H1 (cell line): ENCODE measurements at regions of chr10 and their contacts with region 1.

Region 1: DNA sequence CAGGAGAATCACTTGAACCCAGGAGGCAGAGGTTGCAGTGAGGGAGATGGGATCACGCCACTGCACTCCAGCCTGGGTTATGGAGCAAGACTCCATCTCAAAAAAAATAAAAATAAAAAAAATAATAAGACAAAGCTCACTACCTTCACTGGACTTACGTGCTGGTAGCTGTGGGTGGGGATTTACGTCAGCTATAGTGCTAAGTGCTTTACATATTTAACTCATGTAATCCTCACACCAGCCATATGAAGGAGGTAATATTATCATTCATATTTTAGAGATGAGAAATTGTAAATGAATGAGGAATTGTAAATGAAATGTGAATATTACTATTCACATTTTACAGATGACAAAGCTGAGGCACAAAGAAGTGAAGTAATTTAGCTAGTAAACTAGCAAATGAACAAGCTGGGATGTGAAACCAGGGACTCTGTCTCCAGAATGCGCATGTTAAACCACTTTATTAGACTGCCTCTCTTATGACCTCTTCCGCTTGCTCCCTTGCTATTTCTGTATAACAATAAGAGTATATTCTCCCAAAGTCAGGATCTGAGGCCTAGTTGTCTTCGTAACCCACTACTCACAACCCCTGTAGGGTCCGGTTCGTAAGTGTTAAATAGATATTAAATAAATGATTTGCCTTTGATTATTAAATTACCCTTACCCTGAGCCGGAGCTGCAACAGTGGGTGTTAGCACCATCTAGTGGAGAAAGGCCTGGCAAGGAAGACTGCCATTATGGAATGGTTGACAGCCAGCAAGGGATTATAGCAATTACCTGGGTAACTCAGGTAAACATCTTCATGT is 70.2 kb downstream of the HTR7 start:
- DNase-seq: no peak
- H3K4me3 ChIP-seq: no peak overlapping the region
- H3K27ac ChIP-seq: no peak overlapping the region
- H3K4me1 ChIP-seq: peaks cover 0 to 11% (median 4%) of the 10 kb centered on the region in 4 experiments; a peak in 4 of 7 replicates
- H3K27me3 ChIP-seq: no peaks in the 10 kb centered on the region
- CTCF ChIP-seq: peak; percentile 57 to 86 (median 76)
- EP300 ChIP-seq: no peak
- POLR2A ChIP-seq: no peak
- RAD21 ChIP-seq: peak; percentile 65 to 77

Region 2: GRCh38 chr10:90579602-90580242 is 207.9 kb before region 1 on chr10:
- CTCF ChIA-PET with region 1: no interaction called
- POLR2A ChIA-PET with region 1: no interaction called
- DNase-seq: peak in 1 of 2 experiments; percentile 15
- H3K4me3 ChIP-seq: no peak overlapping the region
- H3K27ac ChIP-seq: no peak overlapping the region
- H3K4me1 ChIP-seq: no peaks in the 10 kb centered on the region
- H3K27me3 ChIP-seq: no peaks in the 10 kb centered on the region
- CTCF ChIP-seq: peak; percentile 44 to 61 (median 56)
- EP300 ChIP-seq: no peak
- POLR2A ChIP-seq: no peak
- RAD21 ChIP-seq: peak; percentile 58 to 69

Region 3: DNA sequence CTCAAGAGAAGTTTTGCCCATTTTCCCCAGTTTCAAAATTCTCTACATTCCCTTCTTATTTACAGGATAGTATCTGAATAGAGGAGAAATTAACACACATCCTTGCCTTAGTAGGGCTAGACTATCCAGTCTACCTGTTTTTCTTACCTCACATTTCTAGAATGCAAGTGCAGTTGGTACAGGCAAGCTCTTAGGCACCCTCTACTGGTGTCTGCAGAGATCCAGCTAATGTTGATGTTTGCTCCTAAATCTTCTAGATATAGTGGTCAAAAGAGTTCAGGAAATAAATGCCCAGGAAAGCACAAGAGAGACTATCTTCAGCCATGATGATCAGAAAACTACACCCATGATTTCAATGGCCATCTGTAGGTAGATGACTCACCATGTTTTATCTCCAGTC is 135.1 kb before region 1 on chr10:
- CTCF ChIA-PET with region 1: no interaction called
- POLR2A ChIA-PET with region 1: no interaction called
- DNase-seq: no peak
- H3K4me3 ChIP-seq: no peak overlapping the region
- H3K27ac ChIP-seq: no peak overlapping the region
- H3K4me1 ChIP-seq: no peaks in the 10 kb centered on the region
- H3K27me3 ChIP-seq: no peaks in the 10 kb centered on the region
- CTCF ChIP-seq: peak in 2 of 3 experiments; percentile 56 to 62; a peak in 3 of 4 replicates
- EP300 ChIP-seq: no peak
- POLR2A ChIP-seq: no peak
- RAD21 ChIP-seq: peak; percentile 73 to 79

Region 4: GRCh38 chr10:90751107-90751997 is 36.2 kb before region 1 on chr10:
- CTCF ChIA-PET with region 1: interaction called, 29 read pairs
- POLR2A ChIA-PET with region 1: no interaction called
- DNase-seq: peak in 1 of 2 experiments; percentile 79
- H3K4me3 ChIP-seq: no peak overlapping the region
- H3K27ac ChIP-seq: no peak overlapping the region
- H3K4me1 ChIP-seq: peaks cover 0 to 2% (median 0%) of the 10 kb centered on the region in 4 experiments; a peak in 2 of 7 replicates
- H3K27me3 ChIP-seq: no peaks in the 10 kb centered on the region
- CTCF ChIP-seq: peak; percentile 35 to 87 (median 73)
- EP300 ChIP-seq: no peak
- POLR2A ChIP-seq: no peak
- RAD21 ChIP-seq: peak; percentile 93 to 96

Region 5: GRCh38 chr10:90798482-90798881 is 10.9 kb after region 1 on chr10:
- CTCF ChIA-PET with region 1: interaction called, 37 read pairs
- POLR2A ChIA-PET with region 1: interaction called, 7 read pairs
- DNase-seq: no peak
- H3K4me3 ChIP-seq: no peak overlapping the region
- H3K27ac ChIP-seq: no peak overlapping the region
- H3K4me1 ChIP-seq: peaks cover 0 to 2% (median 0%) of the 10 kb centered on the region in 4 experiments; a peak in 1 of 7 replicates
- H3K27me3 ChIP-seq: 0 out of 7 replicates have a peak, but pooled peaks cover 0 to under 1% (median 0%) of the 10 kb centered on the region in 4 experiments
- CTCF ChIP-seq: no peak
- EP300 ChIP-seq: no peak
- POLR2A ChIP-seq: no peak
- RAD21 ChIP-seq: no peak

Region 6: DNA sequence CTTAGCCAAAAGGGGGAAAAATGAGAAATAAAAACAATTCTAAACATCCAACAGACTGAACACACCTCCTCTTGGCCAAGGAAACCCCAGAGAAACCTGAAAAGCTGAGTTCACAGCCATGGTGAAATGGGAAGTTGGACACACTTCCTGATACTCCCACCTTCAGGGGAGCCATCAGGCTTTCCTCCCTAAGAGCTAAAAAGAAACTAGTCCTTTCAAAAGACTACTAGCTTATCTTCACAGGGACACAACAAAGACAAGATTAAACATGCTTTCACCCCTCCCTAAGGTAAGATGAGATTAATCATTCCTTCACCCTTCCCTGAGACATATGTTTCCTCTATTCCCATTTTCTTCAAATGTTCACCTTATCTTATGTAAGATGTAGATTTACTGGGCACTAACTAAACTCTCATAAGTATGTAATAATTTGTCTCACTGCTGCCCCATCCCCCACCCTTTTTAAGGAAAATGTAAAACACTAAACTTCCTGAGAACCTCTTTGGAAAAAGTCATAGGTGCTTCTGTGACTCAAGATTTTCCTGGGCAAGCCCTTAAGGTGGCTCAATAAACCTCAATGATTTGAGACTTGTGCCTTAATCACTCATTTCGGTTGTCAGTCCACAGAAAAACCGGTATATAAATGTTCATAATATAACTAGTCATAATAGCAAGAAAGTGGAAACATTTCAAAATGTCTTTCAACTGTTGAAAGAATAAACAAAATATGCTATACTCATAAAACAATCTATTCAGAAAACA is 29.7 kb after region 1 on chr10:
- CTCF ChIA-PET with region 1: interaction called, 16 read pairs
- POLR2A ChIA-PET with region 1: interaction called, 3 read pairs
- DNase-seq: peak in 1 of 2 experiments; percentile 23
- H3K4me3 ChIP-seq: no peak overlapping the region
- H3K27ac ChIP-seq: no peak overlapping the region
- H3K4me1 ChIP-seq: peaks cover 0 to 20% (median 9%) of the 10 kb centered on the region in 4 experiments; a peak in 5 of 7 replicates
- H3K27me3 ChIP-seq: no peaks in the 10 kb centered on the region
- CTCF ChIP-seq: no peak
- EP300 ChIP-seq: no peak
- POLR2A ChIP-seq: no peak
- RAD21 ChIP-seq: no peak

Region 7: DNA sequence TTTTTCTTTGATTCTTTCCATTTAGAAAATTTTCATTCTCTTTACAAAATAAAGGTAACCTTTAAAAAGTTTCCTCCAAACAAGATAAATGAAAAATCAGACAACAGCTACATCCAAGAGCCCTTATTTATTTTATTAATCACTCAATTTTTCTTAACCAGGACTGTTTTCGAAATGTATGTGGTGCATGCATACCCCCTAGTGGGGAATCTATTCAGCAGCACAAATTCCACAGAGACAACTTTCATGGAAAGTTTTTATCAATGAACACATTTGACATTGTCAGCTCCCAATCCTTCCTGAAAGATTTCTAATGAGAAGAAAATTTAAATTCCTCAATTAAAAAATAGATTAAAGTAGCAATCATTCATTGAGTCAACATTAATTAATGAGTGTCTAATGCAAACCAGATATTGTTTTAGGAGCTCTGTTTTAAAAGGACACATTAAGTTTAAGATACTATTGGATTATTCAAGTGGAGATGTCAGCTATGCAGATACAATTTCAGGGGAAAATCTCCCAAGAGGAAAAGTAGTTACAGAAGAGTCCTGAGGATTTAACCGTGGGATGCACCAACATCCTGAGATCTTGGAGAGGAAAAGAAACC is 75.4 kb after region 1 on chr10:
- CTCF ChIA-PET with region 1: interaction called, 24 read pairs
- POLR2A ChIA-PET with region 1: no interaction called
- DNase-seq: no peak
- H3K4me3 ChIP-seq: no peak overlapping the region
- H3K27ac ChIP-seq: no peak overlapping the region
- H3K4me1 ChIP-seq: peaks cover 0 to 3% (median 0%) of the 10 kb centered on the region in 4 experiments; a peak in 2 of 7 replicates
- H3K27me3 ChIP-seq: no peaks in the 10 kb centered on the region
- CTCF ChIP-seq: peak in 2 of 3 experiments; percentile 54 to 61; a peak in 3 of 4 replicates
- EP300 ChIP-seq: no peak
- POLR2A ChIP-seq: no peak
- RAD21 ChIP-seq: peak; percentile 82 to 84